PC-9 (cell line): ENCODE measurements at regions of chr1 and their contacts with region 1.

Region 1: GRCh38 chr1:9101510-9102146 is 27.3 kb downstream of the GPR157 start:
- DNase-seq: peak in 1 of 2 experiments; percentile 38
- H3K4me3 ChIP-seq: no peak overlapping the region
- H3K27ac ChIP-seq: no peak overlapping the region
- H3K4me1 ChIP-seq: no peaks in the 10 kb centered on the region
- H3K27me3 ChIP-seq: no peaks in the 10 kb centered on the region
- CTCF ChIP-seq: peak; percentile 63

Region 2: DNA sequence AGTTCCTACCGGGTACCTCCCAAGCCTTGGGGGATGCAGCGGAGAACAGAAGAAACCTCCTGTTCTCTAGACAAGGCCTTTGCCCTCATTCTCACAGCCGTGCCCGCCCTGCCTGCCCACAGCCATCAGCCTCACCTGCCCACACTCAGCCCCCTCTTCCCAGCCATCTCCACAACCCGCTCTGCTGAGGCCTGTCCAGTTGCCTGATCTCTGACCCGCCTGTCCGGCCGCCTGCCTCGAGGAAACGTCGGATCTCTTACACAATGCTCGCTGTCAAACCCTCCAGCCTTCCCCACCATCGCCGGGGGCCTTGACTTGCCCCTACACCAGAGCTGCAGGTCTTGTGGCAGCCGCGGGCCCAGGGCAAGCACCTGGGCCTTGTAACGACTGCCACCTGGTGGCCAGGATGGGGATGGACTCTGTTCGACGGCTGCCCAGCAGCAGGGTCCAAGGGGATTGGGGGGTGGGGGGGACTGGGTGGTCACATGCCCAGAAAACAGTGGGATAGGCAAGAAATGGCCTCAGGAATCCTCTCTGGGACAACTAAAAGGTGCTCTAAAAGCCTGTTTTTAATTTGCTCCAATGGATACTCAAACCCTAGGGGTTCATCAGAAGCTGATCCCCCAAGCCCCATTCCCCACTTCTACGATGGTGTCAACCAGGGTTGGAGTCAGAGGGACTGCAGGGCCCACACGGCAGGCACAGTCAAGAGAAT is 752.7 kb before region 1 on chr1:
- CTCF ChIA-PET with region 1: interaction called, 13 read pairs
- POLR2A ChIA-PET with region 1: no interaction called
- intact Hi-C with region 1: no loop called
- DNase-seq: peak in 1 of 2 experiments; percentile 59
- H3K4me3 ChIP-seq: no peak overlapping the region
- H3K27ac ChIP-seq: no peak overlapping the region
- H3K4me1 ChIP-seq: peaks cover 7% of the 10 kb centered on the region
- H3K27me3 ChIP-seq: no peaks in the 10 kb centered on the region
- CTCF ChIP-seq: peak; percentile 89

Region 3: DNA sequence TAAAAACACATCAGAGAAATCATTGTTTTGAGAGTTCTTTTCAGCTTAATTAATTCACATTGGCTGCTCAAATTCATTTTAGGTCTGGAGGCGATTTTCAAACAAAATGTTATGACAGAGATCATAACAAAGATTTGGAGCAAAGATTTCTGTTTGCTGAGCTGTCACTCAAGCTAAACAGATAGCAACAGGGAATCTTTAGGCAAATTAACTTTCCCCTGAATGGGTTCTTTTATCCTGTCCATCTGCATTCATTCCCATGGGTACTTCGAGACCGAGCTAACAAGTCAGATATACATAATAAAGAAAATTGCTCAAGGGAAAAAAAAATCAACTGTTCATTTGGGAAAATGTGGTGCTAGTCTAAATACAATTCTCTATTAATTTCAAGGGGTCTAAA is 186.2 kb before region 1 on chr1:
- CTCF ChIA-PET with region 1: no interaction called
- POLR2A ChIA-PET with region 1: no interaction called
- intact Hi-C with region 1: loop called (anchors 5 kb)
- DNase-seq: no peak
- H3K4me3 ChIP-seq: no peak overlapping the region
- H3K27ac ChIP-seq: no peak overlapping the region
- H3K4me1 ChIP-seq: no peaks in the 10 kb centered on the region
- H3K27me3 ChIP-seq: no peaks in the 10 kb centered on the region
- CTCF ChIP-seq: no peak

Region 4: DNA sequence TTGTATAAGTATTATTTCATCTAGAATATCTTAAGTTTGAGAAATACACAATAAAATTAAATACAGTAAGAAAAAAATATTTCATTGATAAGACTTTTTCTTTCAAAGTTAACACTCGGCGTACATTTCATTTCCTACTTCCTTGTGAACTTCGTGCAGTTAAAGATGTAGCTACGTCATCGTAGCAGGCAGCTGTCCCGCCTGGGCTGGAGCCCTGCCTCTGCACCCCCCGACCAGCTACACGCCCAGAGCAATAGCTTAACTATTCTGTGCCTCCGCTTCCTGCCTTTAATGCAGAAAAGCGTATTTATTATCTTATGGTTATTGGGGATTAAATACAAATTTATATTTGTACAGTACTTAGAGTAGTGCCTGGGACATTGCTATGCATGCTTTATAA is 668.7 kb after region 1 on chr1:
- CTCF ChIA-PET with region 1: no interaction called
- POLR2A ChIA-PET with region 1: no interaction called
- intact Hi-C with region 1: no loop called
- DNase-seq: no peak
- H3K4me3 ChIP-seq: no peak overlapping the region
- H3K27ac ChIP-seq: no peak overlapping the region
- H3K4me1 ChIP-seq: peaks cover 15% of the 10 kb centered on the region
- H3K27me3 ChIP-seq: no peaks in the 10 kb centered on the region
- CTCF ChIP-seq: no peak